ENCODE measurements at regions of chr1 and their contacts with region 1.

Region 1: GRCh38 chr1:182391362-182392044 is at the start of gene GLUL:
- DNase-seq: peak; percentile 94 to 96
- ATAC-seq: peak; percentile 74 to 80
- H3K4me3 ChIP-seq: peak within 1 kb of the TSS; percentile 77 to 90 (median 82)
- H3K27ac ChIP-seq: peak within 1 kb of the TSS; percentile 94 to 99 (median 97)
- H3K4me1 ChIP-seq: peaks cover 25 to 31% of the 10 kb centered on the region in 2 donors
- H3K27me3 ChIP-seq: no peaks in the 10 kb centered on the region
- CTCF ChIP-seq: no peak
- POLR2A ChIP-seq: peak; percentile 100
- total RNA-seq, gene GLUL: 4,746 to 22,010 (median 11,052) TPM

Region 2: DNA sequence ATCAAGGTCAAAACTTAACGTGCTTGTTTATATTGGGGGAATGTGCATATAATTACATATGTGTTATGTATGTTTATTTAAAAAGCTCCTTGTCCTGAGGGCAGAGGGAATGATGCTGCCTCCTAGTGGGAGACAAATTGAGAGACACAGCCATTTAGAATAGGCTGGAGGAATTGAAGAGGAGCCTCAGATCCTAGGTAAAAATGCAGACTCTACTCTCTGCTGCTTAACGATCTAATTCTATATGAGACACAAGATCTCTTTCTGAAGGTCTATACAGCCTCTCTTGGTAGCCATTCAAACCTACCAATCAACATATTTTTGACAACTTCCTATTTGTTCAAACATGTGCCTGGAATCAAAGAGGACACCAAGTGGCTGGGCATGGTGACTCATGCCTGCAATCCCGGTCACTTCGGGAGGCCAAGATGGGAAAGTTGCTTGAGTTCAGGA is 193.4 kb before region 1 on chr1:
- in situ Hi-C with region 1: no loop called
- intact Hi-C with region 1: loop called (anchors 2 kb)
- DNase-seq: peak in 1 of 2 donors; percentile 36
- ATAC-seq: no peak
- H3K4me3 ChIP-seq: no peak overlapping the region
- H3K27ac ChIP-seq: peak overlapping the region; percentile 64 to 83 (median 74)
- H3K4me1 ChIP-seq: peaks cover 21 to 35% of the 10 kb centered on the region in 2 donors
- H3K27me3 ChIP-seq: no peaks in the 10 kb centered on the region
- CTCF ChIP-seq: peak in 3 of 5 experiments; percentile 19 to 36 (median 27)
- POLR2A ChIP-seq: no peak

Region 3: DNA sequence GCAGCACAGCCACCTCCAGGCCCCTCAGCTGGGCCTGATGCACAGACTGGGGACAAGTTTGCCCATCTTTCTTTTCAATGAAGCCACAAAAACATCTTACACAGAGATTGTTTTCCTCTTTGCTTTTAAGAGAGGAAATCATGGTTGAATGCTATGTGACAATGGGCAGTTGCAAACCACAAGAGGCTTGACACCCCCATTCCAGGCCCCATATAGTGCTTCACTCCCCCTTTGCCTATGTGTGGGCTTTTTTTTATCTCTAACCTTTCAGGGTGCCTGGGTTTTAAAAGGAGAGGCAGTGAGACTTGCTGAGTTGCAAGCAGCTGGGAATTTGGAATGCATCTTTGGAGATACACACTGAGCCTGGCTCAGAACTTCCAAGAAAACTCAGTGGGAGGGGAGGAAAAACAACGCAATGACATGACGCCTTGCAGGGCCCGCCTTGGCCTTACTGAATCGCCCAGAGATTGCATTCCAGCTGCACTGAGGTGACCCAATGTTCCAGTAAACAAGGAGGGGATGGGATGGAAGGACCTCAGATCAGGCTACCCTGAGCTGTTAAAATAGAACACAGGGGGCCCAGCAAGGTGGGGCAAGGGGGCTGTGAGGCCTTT is 184.8 kb before region 1 on chr1:
- in situ Hi-C with region 1: no loop called
- intact Hi-C with region 1: loop called (anchors 2 kb)
- DNase-seq: peak; percentile 80 to 92
- ATAC-seq: peak; percentile 76 to 83
- H3K4me3 ChIP-seq: no peak overlapping the region
- H3K27ac ChIP-seq: peak overlapping the region; percentile 74 to 93 (median 87)
- H3K4me1 ChIP-seq: peaks cover 25 to 29% of the 10 kb centered on the region in 2 donors
- H3K27me3 ChIP-seq: no peaks in the 10 kb centered on the region
- CTCF ChIP-seq: no peak
- POLR2A ChIP-seq: peak; percentile 36 to 68

Region 4: DNA sequence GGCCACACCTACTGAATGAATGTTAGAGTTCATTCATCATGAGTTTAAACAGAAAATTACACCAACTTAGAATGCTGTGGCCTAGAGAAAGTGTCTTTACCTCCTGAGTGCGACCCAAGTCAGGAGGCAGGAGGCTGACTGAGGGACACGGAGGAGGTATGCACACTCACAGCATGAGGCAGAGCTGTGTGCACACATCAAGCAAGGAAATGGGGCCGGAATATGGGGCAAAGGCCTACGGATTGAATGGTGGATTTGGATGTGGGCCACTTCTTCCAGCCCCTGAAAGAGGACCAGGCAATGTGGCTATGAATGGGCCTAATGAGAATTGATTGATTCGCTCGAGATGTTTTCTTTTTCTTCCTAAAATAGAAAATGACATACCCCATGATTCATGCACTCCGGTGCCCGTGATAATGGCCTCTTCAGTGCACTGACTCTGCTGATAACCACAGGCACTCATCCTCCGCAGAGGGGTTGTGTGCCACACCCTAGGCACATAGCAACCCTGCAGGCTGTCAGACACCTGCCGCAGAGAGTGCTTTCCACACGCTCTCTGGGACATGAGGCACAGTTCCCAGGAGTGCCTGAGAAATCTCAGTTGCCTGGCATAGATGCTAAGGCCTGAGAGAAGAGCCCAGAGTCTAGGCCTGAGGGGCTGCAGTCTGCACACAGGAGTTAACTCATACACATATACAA is 155.4 kb before region 1 on chr1:
- in situ Hi-C with region 1: no loop called
- intact Hi-C with region 1: loop called (anchors 10 kb)
- DNase-seq: peak; percentile 68 to 71
- ATAC-seq: peak; percentile 87
- H3K4me3 ChIP-seq: no peak overlapping the region
- H3K27ac ChIP-seq: peak overlapping the region; percentile 69 to 75 (median 74)
- H3K4me1 ChIP-seq: peaks cover 0 to 12% of the 10 kb centered on the region in 2 donors
- H3K27me3 ChIP-seq: no peaks in the 10 kb centered on the region
- CTCF ChIP-seq: no peak
- POLR2A ChIP-seq: peak; percentile 21 to 35

Region 5: DNA sequence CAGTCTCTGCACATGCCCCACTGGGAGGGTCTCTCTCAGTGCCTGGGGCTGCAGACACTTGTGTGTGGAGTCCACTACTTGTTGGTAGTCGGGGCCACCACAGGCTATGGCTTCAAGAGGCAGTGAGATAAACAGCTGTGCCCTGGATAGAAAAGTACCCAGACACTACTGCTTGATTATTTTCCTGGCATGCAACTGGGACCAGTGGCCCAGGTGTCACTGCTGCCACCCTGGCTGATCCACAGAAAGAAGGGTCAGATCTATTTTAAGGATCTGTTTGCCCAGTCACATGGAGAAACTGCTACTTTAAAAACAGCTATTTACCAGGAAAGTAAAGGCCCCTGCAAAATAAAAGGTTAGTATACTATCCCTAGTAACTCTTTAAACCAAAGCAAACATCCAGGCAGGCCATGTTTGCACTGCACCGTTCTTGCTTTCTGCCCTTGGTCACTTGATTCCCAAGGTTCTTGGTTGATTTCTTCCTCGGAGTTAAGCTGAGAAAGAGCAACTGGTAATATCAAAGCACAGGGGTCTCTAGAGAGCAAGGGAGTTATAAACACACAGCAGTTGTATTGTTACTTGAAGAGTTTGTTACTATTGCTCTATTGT is 99.8 kb before region 1 on chr1:
- in situ Hi-C with region 1: no loop called
- intact Hi-C with region 1: loop called (anchors 2 kb)
- DNase-seq: peak; percentile 72 to 78
- ATAC-seq: peak; percentile 37 to 54
- H3K4me3 ChIP-seq: peak overlapping the region in 1 of 4 donors; percentile 2
- H3K27ac ChIP-seq: peak overlapping the region; percentile 85 to 94 (median 90)
- H3K4me1 ChIP-seq: peaks cover 45 to 53% of the 10 kb centered on the region in 2 donors
- H3K27me3 ChIP-seq: no peaks in the 10 kb centered on the region
- CTCF ChIP-seq: no peak
- POLR2A ChIP-seq: peak; percentile 30 to 49

Region 6: DNA sequence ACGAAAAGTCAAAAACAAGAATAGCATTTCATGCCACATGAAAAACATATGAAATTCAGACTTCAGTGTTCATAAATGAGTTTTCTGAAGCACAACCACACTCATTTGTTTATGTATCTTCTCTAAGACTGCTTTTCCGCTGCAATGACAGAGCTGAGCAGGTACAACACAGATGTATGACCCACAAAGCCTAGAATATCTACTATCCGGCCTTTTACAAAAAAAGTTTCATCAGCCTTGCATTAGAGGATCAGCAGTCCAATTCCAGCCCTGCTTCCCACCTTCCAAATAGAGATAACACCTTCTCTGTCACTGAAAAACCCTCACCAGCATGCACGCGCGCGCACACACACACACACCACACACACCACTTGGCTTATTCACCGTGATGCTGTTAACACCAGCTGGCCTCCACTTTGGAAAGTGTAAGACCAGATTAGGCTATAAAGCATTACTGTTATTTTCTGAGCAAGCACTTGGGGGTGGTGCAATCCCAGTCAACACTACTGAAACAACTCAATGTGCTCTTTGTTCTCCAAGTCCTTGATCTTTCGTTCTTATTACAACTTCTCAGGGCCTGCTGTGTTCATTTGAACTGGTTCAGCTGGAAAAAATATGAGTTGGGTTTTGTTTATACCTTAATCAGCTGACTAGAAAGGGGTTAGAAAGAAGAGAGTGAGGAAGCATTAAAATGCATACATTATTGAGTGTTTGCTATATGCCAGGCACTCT is 89.9 kb before region 1 on chr1:
- in situ Hi-C with region 1: no loop called
- intact Hi-C with region 1: loop called (anchors 2 kb)
- DNase-seq: peak in 1 of 2 donors; percentile 38
- ATAC-seq: peak in 1 of 2 donors; percentile 65
- H3K4me3 ChIP-seq: no peak overlapping the region
- H3K27ac ChIP-seq: peak overlapping the region; percentile 18 to 38 (median 28)
- H3K4me1 ChIP-seq: peaks cover 7 to 27% of the 10 kb centered on the region in 2 donors
- H3K27me3 ChIP-seq: no peaks in the 10 kb centered on the region
- CTCF ChIP-seq: no peak
- POLR2A ChIP-seq: no peak

Region 7: GRCh38 chr1:182348961-182349747 is 42.3 kb before region 1 on chr1:
- in situ Hi-C with region 1: no loop called
- intact Hi-C with region 1: loop called (anchors 2 kb)
- DNase-seq: peak; percentile 85 to 92
- ATAC-seq: peak; percentile 73 to 75
- H3K4me3 ChIP-seq: no peak overlapping the region
- H3K27ac ChIP-seq: peak overlapping the region; percentile 89 to 100 (median 94)
- H3K4me1 ChIP-seq: peaks cover 46 to 50% of the 10 kb centered on the region in 2 donors
- H3K27me3 ChIP-seq: no peaks in the 10 kb centered on the region
- CTCF ChIP-seq: peak in 1 of 5 experiments; percentile 17
- POLR2A ChIP-seq: peak; percentile 67 to 79

Region 8: DNA sequence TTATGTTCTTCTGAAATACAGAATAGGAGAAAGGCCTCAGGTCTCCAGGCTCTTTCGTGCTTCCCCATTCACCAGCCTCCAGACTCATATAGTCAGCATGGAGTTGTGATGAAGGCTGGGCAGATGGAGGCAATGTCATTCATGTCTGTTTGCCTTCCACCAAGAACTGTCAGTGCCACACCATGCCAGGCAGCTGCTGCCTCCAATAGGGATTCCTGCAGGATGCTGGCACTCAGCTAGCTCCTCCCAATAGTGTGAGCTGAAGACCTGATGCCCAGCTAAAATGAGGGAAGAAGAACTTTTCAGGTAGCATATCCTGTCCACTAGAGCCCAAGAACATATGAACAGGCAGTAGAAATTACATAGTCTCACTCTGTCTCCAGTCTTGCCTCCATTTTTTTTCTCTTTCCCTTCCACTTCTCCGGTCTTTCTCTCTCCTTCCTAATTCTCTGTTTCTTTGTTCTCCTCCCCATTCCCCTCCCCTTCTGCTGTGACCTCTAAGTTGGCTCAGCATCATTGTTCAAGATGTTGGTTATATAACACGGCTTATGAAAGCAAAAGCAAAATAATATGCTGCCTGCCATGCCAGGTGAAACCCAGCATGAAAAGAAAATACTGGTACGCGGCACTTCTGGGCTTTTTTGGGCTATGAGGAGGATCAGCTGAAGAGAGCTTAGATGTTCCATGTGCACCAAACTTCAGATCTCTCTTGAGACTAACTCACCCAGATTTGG is 17.2 kb before region 1 on chr1:
- in situ Hi-C with region 1: no loop called
- intact Hi-C with region 1: no loop called
- DNase-seq: no peak
- ATAC-seq: no peak
- H3K4me3 ChIP-seq: no peak overlapping the region
- H3K27ac ChIP-seq: peak overlapping the region in 2 of 4 donors; percentile 39 to 47
- H3K4me1 ChIP-seq: peaks cover 5% of the 10 kb centered on the region in 2 donors
- H3K27me3 ChIP-seq: no peaks in the 10 kb centered on the region
- CTCF ChIP-seq: no peak
- POLR2A ChIP-seq: no peak

Region 9: DNA sequence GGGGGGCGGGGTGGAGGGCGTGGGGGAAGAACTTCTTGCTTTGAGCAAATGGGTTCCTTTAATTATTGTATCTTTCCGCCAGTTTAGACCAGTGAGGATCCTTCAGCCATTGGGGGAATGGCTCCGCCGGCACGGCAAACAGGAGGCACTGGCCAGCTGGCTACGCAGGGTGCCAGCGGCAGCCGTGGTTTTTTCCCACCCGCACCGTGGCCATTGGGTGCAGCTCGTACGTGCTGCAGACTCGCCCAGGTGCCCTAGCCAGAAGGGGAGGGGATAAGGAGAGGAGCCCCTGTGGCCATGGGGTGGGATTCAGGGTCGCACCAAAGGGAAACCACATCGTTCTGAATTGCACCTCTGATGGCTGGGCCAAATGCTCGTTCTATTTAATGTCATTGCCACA is 124.1 kb after region 1 on chr1:
- in situ Hi-C with region 1: no loop called
- intact Hi-C with region 1: no loop called
- DNase-seq: no peak
- ATAC-seq: no peak
- H3K4me3 ChIP-seq: no peak overlapping the region
- H3K27ac ChIP-seq: no peak overlapping the region
- H3K4me1 ChIP-seq: no peaks in the 10 kb centered on the region
- H3K27me3 ChIP-seq: no peaks in the 10 kb centered on the region
- CTCF ChIP-seq: no peak
- POLR2A ChIP-seq: no peak

Region 10: DNA sequence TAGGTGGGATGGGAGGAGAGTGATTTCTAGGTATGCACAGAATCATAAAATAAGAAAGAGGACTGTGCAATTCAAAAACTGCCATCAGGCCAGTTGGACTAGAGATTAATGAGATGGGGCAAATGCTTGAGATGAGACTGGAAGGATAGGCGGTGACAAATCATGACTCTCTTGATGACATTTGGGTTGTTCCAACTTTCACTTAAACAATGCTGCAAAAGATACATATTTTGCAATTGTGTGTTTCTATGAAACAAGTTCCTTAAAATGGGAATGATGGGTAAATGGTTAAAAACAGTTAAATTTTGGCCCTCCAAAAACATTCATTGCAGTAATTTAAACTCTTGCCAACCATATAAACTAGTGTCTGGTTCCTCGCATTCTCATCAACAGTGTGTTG is 142.4 kb after region 1 on chr1:
- in situ Hi-C with region 1: no loop called
- intact Hi-C with region 1: no loop called
- DNase-seq: no peak
- ATAC-seq: no peak
- H3K4me3 ChIP-seq: no peak overlapping the region
- H3K27ac ChIP-seq: no peak overlapping the region
- H3K4me1 ChIP-seq: no peaks in the 10 kb centered on the region
- H3K27me3 ChIP-seq: no peaks in the 10 kb centered on the region
- CTCF ChIP-seq: no peak
- POLR2A ChIP-seq: no peak

Region 11: DNA sequence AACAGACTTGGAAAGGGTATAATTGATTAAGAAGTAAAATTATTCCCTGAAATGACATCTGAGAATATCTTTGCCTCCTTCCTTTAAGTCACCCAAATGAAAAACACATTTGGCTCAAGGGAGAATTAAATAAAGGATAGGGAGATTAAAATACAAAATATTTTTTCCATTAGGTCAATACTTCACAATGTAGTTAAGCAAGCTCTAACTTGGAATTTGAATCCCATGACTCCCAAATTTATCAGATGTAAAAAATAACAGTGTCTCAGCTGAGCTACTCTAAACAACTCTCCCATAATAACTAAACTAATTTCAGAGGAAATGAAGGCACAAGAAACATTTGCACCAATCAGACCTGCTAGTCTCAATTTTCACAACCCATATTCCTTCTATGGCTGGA is 1033.2 kb after region 1 on chr1:
- in situ Hi-C with region 1: no loop called
- intact Hi-C with region 1: no loop called
- DNase-seq: no peak
- ATAC-seq: no peak
- H3K4me3 ChIP-seq: no peak overlapping the region
- H3K27ac ChIP-seq: no peak overlapping the region
- H3K4me1 ChIP-seq: no peaks in the 10 kb centered on the region
- H3K27me3 ChIP-seq: peaks cover 2 to 15% (median 9%) of the 10 kb centered on the region in 3 donors
- CTCF ChIP-seq: no peak
- POLR2A ChIP-seq: no peak

Measured in gastrocnemius medialis (tissue), 4 donors.